GM10248 (cell line): ENCODE measurements at regions of chr11 and their contacts with region 1.

Region 1: DNA sequence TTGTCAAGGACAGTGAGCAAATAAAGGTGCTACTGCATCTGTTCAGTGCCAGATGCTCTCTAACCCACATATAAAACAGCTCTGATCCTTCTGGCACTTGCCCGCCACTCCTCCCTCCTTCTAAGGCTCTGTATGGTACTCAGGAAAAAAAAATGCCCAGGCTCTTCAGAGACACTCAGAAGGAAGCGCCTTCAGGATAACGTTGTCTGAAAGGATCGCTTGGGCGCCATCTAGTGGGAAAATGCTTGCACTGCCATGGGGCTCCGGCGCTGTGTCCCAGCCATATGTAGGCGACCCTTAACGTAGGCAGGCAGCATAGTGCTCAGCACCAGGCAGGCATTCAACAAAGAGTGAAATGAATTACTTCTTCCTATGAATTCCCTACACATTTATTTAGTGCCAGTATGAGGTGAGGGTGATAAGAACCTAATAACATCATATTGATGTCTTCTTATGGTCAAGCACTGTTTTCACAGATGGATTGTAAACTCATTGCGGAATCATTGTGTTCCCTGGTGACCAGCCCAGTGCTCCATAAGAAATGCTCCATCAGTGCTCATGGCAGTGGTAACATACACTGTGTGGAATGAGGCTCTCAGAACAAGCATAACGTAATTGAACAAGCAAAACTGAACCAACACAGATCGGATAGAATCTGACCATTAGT is 39.6 kb downstream of the PAMR1 start:
- DNase-seq: peak; percentile 65
- CTCF ChIP-seq: peak; percentile 94

Region 2: GRCh38 chr11:35458846-35459245 is 26.9 kb before region 1 on chr11:
- CTCF ChIA-PET with region 1: interaction called, 14 read pairs
- POLR2A ChIA-PET with region 1: interaction called, 3 read pairs
- DNase-seq: no peak
- CTCF ChIP-seq: no peak

Region 3: DNA sequence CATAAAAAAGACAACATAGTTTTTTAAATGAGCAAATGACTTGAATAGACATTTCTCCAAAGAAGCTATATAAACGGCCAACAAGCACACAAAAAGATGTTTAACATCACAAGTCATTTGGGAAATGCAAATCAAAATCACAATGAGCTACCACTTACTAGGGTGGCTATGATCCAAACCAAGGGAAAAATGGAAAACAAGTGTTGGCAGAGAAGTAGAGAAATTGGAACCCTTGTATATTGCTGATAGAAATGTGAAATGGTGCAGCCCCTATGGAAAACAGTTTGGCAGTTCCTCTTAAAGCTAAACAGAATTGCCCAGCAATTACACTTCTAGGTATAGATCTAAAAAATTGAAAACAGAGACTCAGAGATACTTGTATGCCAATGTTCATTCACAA is 10.6 kb after region 1 on chr11:
- CTCF ChIA-PET with region 1: interaction called, 17 read pairs
- POLR2A ChIA-PET with region 1: no interaction called
- DNase-seq: no peak
- CTCF ChIP-seq: no peak